SK-N-SH (cell line): ENCODE measurements at regions of chr1 and their contacts with region 1.

Region 1: DNA sequence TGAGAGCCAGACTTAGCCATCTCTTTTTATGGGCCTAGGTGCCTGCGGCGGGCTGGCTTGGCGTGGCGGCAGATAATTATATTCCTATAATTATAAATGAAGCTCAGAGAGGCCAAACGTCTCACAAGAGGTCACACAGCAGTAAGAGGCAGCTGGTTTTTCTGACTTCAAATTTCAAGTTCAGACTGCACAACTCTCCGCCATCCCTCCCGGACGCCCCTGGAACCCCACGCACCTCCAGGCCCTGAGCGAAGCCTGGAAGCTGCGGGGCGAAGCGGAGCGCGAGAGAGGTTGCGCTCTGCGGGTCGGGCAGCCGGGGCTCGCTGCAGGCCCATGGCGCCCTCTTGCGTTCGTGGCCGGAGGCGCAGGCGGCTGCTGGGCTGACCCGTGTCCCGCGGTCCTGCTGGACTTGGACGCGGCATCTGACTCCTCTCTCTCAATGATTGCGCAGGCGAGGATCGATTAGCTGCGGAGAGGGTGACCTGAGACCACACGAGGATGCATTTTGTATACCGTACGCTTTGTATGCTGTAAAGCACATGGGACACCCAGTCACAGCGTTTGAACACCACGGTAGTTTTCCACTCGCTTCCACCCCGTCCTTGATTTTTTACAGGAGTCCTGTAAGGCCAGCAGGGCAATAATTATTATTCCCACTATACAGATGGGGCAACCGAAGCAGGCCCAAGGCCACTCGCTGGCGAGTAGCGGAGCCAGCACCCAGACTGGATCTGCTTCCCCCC is 272.7 kb downstream of the FOXD2 start:
- DNase-seq: peak; percentile 96
- H3K4me3 ChIP-seq: peak overlapping the region in 1 of 2 experiments; percentile 58; a peak in 1 of 4 replicates
- H3K27ac ChIP-seq: no peak overlapping the region
- H3K4me1 ChIP-seq: peaks cover 0 to 23% of the 10 kb centered on the region in 2 experiments; a peak in 1 of 4 replicates
- H3K27me3 ChIP-seq: peaks cover 68% of the 10 kb centered on the region
- CTCF ChIP-seq: peak; percentile 93
- EP300 ChIP-seq: no peak
- RAD21 ChIP-seq: peak; percentile 92

Region 2: DNA sequence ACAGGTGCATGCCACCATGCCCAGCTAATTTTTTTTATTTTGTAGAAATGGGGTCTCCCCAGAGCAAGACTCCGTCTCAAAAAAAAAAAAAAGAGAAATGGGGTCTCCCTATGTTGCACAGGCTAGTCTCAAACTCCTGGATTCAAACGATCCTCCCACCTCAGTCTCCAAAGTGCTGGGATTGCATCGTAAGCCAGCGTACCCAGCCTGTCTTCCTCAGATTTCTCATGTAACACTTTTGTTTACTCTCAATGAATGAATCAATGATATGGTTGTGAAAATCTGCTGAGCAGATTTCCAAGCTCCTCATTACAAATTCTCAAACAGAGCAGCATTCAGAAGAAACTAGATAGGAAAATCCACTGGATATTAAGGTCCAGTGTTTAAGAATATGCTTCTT is 370.3 kb before region 1 on chr1:
- CTCF ChIA-PET with region 1: no interaction called
- POLR2A ChIA-PET with region 1: no interaction called
- DNase-seq: no peak
- H3K4me3 ChIP-seq: no peak overlapping the region
- H3K27ac ChIP-seq: no peak overlapping the region
- H3K4me1 ChIP-seq: peaks cover under 1 to 7% of the 10 kb centered on the region in 2 experiments; a peak in 2 of 4 replicates
- H3K27me3 ChIP-seq: no peaks in the 10 kb centered on the region
- CTCF ChIP-seq: no peak
- EP300 ChIP-seq: no peak
- RAD21 ChIP-seq: no peak

Region 3: DNA sequence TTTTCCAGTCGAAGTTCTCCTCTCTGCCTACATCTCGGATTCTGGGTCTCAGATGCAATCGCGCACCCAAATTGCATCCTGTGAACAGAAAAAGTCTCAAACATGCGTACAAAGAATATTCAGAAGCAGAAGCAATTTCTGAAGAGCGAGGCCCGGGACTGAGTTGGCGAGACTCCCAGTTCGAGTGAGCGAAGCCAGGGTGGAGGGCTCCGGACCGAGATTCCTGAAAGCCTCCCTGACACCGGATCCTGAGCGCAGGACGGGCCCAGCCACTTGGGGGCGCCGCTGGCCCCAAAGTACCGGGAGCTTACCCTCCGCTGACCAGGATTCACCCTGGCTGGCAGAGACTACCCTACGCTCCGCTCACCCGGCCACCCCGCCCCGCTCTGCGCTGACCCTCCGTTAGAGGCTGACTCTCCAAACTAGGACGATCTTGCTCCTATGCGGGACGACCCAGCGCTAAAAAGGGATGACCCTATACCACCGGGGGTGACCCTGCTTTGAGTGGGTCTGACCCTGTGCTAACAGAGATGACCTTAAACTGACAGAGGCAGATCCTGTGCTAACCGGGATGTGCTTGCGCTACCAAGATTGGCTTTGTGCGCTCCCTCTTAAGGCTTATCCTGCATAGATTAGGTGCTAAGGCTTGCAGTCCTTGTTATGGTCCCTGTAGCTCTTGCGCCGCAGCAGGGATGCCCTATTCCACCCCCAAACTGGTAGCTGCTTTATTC is 260.5 kb before region 1 on chr1:
- CTCF ChIA-PET with region 1: interaction called, 48 read pairs
- POLR2A ChIA-PET with region 1: no interaction called
- DNase-seq: peak; percentile 67
- H3K4me3 ChIP-seq: no peak overlapping the region; a peak in 1 of 4 replicates
- H3K27ac ChIP-seq: no peak overlapping the region
- H3K4me1 ChIP-seq: no peaks in the 10 kb centered on the region; a peak in 1 of 4 replicates
- H3K27me3 ChIP-seq: peaks cover 73% of the 10 kb centered on the region
- CTCF ChIP-seq: peak; percentile 53
- EP300 ChIP-seq: no peak
- RAD21 ChIP-seq: peak; percentile 53

Region 4: GRCh38 chr1:47507881-47508701 is 202.4 kb before region 1 on chr1:
- CTCF ChIA-PET with region 1: interaction called, 28 read pairs
- POLR2A ChIA-PET with region 1: no interaction called
- DNase-seq: peak; percentile 80
- H3K4me3 ChIP-seq: peak overlapping the region; percentile 44 to 46
- H3K27ac ChIP-seq: no peak overlapping the region
- H3K4me1 ChIP-seq: peaks cover 0 to 13% of the 10 kb centered on the region in 2 experiments; a peak in 1 of 4 replicates
- H3K27me3 ChIP-seq: peaks cover 31% of the 10 kb centered on the region
- CTCF ChIP-seq: no peak
- EP300 ChIP-seq: no peak
- RAD21 ChIP-seq: no peak

Region 5: DNA sequence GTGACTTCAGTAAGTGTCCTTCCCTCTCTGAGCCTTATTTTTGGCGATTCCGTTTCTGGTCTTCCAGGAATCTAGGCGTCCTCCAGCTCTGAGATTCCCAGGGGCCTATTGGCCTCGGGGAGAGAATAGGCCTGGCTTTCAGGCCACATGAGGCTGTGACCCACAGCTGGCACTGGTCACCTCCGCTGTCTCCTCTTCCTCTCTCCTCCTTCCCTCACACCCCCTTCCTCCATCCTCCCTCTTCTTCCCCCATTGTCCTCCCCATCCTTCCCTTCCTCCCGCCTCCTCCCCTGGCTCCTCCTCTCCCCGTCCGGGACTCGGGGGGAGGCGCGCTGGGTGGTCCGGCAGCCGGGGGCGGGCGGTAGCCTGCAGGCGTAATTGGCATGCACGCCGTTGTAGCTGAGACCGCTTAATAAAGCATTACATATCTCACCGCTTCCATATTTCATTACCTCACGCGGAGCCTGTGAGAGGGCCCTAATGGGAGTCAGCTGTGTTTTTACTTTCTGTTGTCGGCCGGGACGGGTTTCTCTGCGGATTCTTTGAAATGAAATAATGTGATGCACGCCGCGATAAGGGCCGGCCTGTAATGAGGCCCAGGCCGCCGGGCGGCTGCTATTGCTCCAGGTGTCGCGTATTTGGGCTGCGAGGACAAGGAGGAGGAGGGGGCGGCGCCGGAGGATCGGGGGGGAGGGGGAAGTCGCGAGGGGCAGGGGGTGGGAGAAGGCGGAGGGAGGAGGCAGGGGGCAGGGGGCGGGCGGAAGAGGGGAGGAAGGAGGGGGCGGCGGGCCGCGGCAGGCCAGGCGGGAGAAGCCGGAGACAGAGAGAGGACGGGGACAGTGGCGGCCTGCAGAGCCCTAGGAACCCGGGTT is 177.3 kb before region 1 on chr1:
- CTCF ChIA-PET with region 1: interaction called, 24 read pairs
- POLR2A ChIA-PET with region 1: no interaction called
- DNase-seq: peak; percentile 89
- H3K4me3 ChIP-seq: peak overlapping the region; percentile 40 to 62
- H3K27ac ChIP-seq: peak overlapping the region in 1 of 2 experiments; percentile 4; a peak in 1 of 4 replicates
- H3K4me1 ChIP-seq: peaks cover 5 to 14% of the 10 kb centered on the region in 2 experiments; a peak in 2 of 4 replicates
- H3K27me3 ChIP-seq: 0 out of 2 replicates have a peak, but pooled peaks cover 11% of the 10 kb centered on the region
- CTCF ChIP-seq: no peak
- EP300 ChIP-seq: peak; percentile 50 to 83; a peak in 3 of 4 replicates
- RAD21 ChIP-seq: peak; percentile 17; the same call in 1 of the 2 replicates

Region 6: DNA sequence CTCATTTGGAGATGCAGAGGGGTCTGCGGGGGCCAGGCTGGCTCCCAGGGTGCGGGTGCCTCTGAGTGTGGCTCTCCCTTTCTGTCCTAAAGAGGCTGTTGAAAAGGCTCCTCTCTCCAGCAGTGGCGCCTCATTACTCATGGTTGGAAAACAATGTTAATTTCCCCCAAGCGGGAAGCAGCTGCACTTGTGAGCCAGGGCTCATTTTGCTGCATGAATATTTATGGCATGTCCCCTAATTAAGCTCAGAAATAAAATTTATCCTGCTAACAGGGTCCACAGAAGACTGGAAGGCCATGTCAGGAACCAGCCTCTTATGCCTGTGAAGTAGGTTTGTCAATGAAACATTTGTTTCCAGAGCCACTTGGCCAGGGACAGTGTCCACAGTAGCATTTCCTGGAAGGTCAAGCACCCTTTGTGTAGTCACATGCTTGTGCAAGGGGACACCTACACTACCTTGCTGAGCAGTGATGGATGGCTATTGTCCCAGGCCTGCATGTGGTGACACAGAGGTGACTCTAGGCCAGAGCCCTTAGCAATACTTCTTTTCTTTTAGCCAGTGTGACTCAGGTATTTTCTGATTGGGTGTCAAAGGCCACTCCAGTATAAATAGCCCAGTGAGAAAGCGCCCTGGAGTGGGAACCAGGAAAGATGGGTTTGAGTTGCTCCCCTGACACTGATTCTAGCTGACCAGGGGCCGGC is 13.6 kb before region 1 on chr1:
- CTCF ChIA-PET with region 1: interaction called, 21 read pairs
- POLR2A ChIA-PET with region 1: no interaction called
- DNase-seq: no peak
- H3K4me3 ChIP-seq: no peak overlapping the region
- H3K27ac ChIP-seq: no peak overlapping the region
- H3K4me1 ChIP-seq: no peaks in the 10 kb centered on the region
- H3K27me3 ChIP-seq: peaks cover 15% of the 10 kb centered on the region; the same call in 1 of the 2 replicates
- CTCF ChIP-seq: no peak
- EP300 ChIP-seq: no peak
- RAD21 ChIP-seq: no peak

Region 7: GRCh38 chr1:47921935-47922415 is 211.5 kb after region 1 on chr1:
- CTCF ChIA-PET with region 1: no interaction called
- POLR2A ChIA-PET with region 1: no interaction called
- DNase-seq: peak; percentile 77
- H3K4me3 ChIP-seq: no peak overlapping the region
- H3K27ac ChIP-seq: peak overlapping the region in 1 of 2 experiments; percentile 62; a peak in 2 of 4 replicates
- H3K4me1 ChIP-seq: peaks cover 0 to 42% of the 10 kb centered on the region in 2 experiments; a peak in 2 of 4 replicates
- H3K27me3 ChIP-seq: no peaks in the 10 kb centered on the region
- CTCF ChIP-seq: no peak
- EP300 ChIP-seq: peak in 1 of 2 experiments; percentile 95; a peak in 2 of 4 replicates
- RAD21 ChIP-seq: peak; percentile 30

Region 8: GRCh38 chr1:47986761-47987200 is 276.3 kb after region 1 on chr1:
- CTCF ChIA-PET with region 1: no interaction called
- POLR2A ChIA-PET with region 1: no interaction called
- DNase-seq: peak; percentile 65
- H3K4me3 ChIP-seq: no peak overlapping the region
- H3K27ac ChIP-seq: no peak overlapping the region
- H3K4me1 ChIP-seq: peaks cover 0 to 3% of the 10 kb centered on the region in 2 experiments; a peak in 2 of 4 replicates
- H3K27me3 ChIP-seq: no peaks in the 10 kb centered on the region
- CTCF ChIP-seq: no peak
- EP300 ChIP-seq: no peak
- RAD21 ChIP-seq: no peak